IMR-90 (cell line): ENCODE measurements at regions of chr12 and their contacts with region 1.

Region 1: DNA sequence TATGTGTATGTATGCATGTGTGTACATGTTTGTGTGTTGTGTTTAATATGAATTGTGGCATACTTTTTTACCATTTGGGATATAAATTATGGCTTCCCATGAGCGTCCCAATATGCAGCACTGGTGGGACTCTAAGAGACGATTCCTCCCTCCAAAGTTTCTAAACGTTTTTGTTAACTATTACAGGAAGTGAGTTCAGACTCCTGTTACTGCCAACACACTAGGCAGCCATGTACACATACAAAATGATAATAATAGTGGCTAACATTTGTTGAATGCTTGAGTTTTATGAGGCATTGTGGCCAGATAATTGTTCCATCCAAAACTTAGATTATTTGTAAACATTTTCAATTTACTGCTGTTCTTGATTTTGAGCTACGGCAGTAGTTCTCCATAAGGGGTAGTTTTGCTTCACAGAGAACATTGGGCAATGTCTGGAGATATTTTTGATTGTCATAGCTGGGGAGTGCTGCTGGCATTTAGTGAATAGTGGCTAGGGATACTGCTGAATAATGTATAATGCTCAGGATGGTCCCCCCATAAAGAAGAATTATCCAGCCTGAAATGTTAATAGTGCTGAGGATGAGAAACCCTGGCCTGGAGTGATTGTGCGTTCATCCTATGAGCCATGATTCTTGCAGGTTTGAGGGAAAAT is 45.1 kb downstream of the ARID2 start:
- DNase-seq: no peak
- ATAC-seq: no peak
- H3K4me3 ChIP-seq: no peak overlapping the region
- H3K27ac ChIP-seq: no peak overlapping the region
- H3K4me1 ChIP-seq: peaks cover 2% of the 10 kb centered on the region; the same call in 1 of the 2 replicates
- H3K27me3 ChIP-seq: no peaks in the 10 kb centered on the region
- CTCF ChIP-seq: no peak
- POLR2A ChIP-seq: no peak
- RAD21 ChIP-seq: no peak

Region 2: DNA sequence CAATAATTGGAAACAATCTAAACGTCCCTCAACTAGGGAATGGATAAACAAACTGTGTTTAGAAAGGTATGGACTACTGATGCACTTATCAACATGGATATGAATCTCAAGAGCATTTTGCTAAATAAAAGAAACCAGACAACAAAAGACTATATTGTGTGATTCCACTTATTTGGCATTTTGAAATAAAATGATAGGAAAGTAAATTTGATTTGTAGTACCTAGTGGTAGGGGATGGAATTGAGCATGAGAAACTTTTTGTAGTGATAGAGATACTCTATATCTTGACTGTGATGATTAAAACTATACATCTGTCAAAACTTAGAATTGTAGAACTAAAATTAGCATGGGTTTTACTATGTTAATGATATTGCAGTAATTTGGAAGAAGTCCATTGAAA is 42.0 kb after region 1 on chr12:
- CTCF ChIA-PET with region 1: no interaction called
- POLR2A ChIA-PET with region 1: no interaction called
- dilution Hi-C with region 1: no loop called
- in situ Hi-C with region 1: no loop called
- intact Hi-C with region 1: loop called (anchors 5 kb)
- DNase-seq: no peak
- ATAC-seq: no peak
- H3K4me3 ChIP-seq: no peak overlapping the region
- H3K27ac ChIP-seq: no peak overlapping the region
- H3K4me1 ChIP-seq: no peaks in the 10 kb centered on the region
- H3K27me3 ChIP-seq: no peaks in the 10 kb centered on the region
- CTCF ChIP-seq: no peak
- POLR2A ChIP-seq: no peak
- RAD21 ChIP-seq: no peak